ENCODE measurements at regions of chr15 and their contacts with region 1.

Region 1: GRCh38 chr15:51380999-51381795 is 39.7 kb downstream of the GLDN start:
- DNase-seq: peak in 3 of 4 donors; percentile 51 to 61 (median 52)
- ATAC-seq: peak; percentile 95
- H3K4me3 ChIP-seq: no peak overlapping the region
- H3K27ac ChIP-seq: no peak overlapping the region
- H3K4me1 ChIP-seq: peaks cover 5 to 9% of the 10 kb centered on the region in 2 donors
- H3K27me3 ChIP-seq: peaks cover 0 to 5% of the 10 kb centered on the region in 2 donors
- CTCF ChIP-seq: peak; percentile 62 to 76

Region 2: DNA sequence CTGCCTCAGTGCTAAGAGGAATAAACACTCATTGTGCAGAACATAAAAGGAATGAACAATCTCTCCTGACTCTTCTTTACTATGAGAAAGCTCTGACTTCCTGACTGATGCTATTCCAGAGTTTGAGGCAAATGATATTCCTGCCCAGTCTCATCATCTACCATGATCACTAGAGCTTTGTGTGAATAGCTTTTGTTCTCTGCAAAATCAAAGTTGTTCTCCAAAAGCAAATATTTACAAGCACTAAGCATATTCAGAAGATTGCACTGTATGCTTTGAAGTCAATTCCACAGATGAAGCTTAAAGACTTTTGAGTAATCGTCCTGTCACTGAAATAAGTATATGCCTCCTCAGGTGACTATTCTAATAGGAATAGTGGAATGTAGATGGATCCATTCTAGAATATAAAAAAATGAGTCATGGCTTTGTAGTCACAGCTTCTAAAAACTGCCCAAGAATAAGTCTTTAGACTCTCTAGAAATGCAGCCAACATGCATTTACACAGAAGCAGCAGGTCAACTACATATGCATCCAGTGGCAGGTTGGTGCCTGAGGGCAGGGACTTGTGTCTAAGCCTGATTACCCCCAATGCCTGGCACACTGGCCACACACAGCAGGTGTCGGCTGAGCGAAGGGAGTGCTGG is 321.0 kb before region 1 on chr15:
- intact Hi-C with region 1: no loop called
- DNase-seq: no peak
- ATAC-seq: no peak
- H3K4me3 ChIP-seq: no peak overlapping the region
- H3K27ac ChIP-seq: no peak overlapping the region
- H3K4me1 ChIP-seq: no peaks in the 10 kb centered on the region
- H3K27me3 ChIP-seq: no peaks in the 10 kb centered on the region
- CTCF ChIP-seq: no peak

Region 3: DNA sequence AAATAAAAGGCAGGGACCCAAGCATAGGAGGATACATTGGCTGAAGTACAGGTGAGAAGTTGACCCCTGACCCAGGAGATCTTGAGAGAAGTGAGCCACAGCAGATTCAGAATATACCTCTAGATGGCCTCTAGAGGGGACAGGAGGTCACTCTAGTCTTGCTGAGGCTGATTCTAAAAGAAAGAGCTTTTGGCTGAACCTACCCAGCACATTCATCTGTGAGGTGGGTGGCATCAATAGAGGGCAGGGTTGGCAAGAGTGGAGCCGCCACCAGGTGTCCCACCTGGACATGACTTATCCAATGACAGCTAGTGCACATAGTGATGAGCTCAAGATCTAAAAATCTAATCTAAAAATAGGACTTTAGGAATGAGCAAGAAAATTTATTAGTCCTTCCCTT is 94.4 kb before region 1 on chr15:
- intact Hi-C with region 1: loop called in 1 of 2 experiments (anchors 5 kb)
- DNase-seq: no peak
- ATAC-seq: no peak
- H3K4me3 ChIP-seq: no peak overlapping the region
- H3K27ac ChIP-seq: no peak overlapping the region
- H3K4me1 ChIP-seq: peaks cover 3 to 16% of the 10 kb centered on the region in 2 donors
- H3K27me3 ChIP-seq: no peaks in the 10 kb centered on the region
- CTCF ChIP-seq: no peak

Measured in left lung (tissue), 14 donors.